Heart right ventricle (tissue), 16 donors: ENCODE measurements at regions of chr20 and their contacts with region 1.

Region 1: GRCh38 chr20:47501483-47502270 is at the start of gene NCOA3:
- DNase-seq: peak; percentile 95 to 97
- ATAC-seq: peak; percentile 97 to 99 (median 99)
- H3K4me3 ChIP-seq: peak within 1 kb of the TSS; percentile 82 to 100 (median 94)
- H3K27ac ChIP-seq: peak within 1 kb of the TSS; percentile 90 to 99 (median 94)
- H3K4me1 ChIP-seq: peaks cover 0 to 46% (median 26%) of the 10 kb centered on the region in 9 donors
- H3K27me3 ChIP-seq: no peaks in the 10 kb centered on the region
- CTCF ChIP-seq: peak; percentile 32 to 69 (median 58)
- total RNA-seq, gene NCOA3: 19.7 to 30.2 (median 22.6) TPM

Region 2: GRCh38 chr20:47272893-47273590 is 228.6 kb before region 1 on chr20:
- intact Hi-C with region 1: no loop called
- DNase-seq: peak in 1 of 2 donors; percentile 77
- ATAC-seq: peak; percentile 39 to 84 (median 69)
- H3K4me3 ChIP-seq: no peak overlapping the region
- H3K27ac ChIP-seq: peak overlapping the region in 9 of 10 donors; percentile 42 to 89 (median 67)
- H3K4me1 ChIP-seq: peaks cover 10 to 53% (median 51%) of the 10 kb centered on the region in 9 donors
- H3K27me3 ChIP-seq: no peaks in the 10 kb centered on the region
- CTCF ChIP-seq: peak; percentile 76 to 92 (median 88)

Region 3: GRCh38 chr20:47392015-47392720 is 109.5 kb before region 1 on chr20:
- intact Hi-C with region 1: loop called in 2 of 10 experiments (anchors 5 kb)
- DNase-seq: no peak
- ATAC-seq: peak in 7 of 8 donors; percentile 39 to 90 (median 54)
- H3K4me3 ChIP-seq: no peak overlapping the region
- H3K27ac ChIP-seq: peak overlapping the region in 2 of 10 donors; percentile 56 to 66
- H3K4me1 ChIP-seq: peaks cover 0 to 14% (median 0%) of the 10 kb centered on the region in 9 donors
- H3K27me3 ChIP-seq: no peaks in the 10 kb centered on the region
- CTCF ChIP-seq: no peak

Region 4: GRCh38 chr20:47464380-47465101 is 37.1 kb before region 1 on chr20:
- intact Hi-C with region 1: no loop called
- DNase-seq: peak; percentile 23 to 53
- ATAC-seq: peak; percentile 69 to 99 (median 90)
- H3K4me3 ChIP-seq: no peak overlapping the region
- H3K27ac ChIP-seq: peak overlapping the region in 7 of 10 donors; percentile 6 to 30 (median 22)
- H3K4me1 ChIP-seq: peaks cover 5 to 28% (median 12%) of the 10 kb centered on the region in 9 donors
- H3K27me3 ChIP-seq: no peaks in the 10 kb centered on the region
- CTCF ChIP-seq: peak; percentile 5 to 42 (median 35)

Region 5: GRCh38 chr20:47540443-47541354 is 39.0 kb after region 1 on chr20:
- intact Hi-C with region 1: loop called in 3 of 10 experiments (anchors 5 kb)
- DNase-seq: no peak
- ATAC-seq: no peak
- H3K4me3 ChIP-seq: no peak overlapping the region
- H3K27ac ChIP-seq: no peak overlapping the region
- H3K4me1 ChIP-seq: peaks cover 5 to 68% (median 54%) of the 10 kb centered on the region in 9 donors
- H3K27me3 ChIP-seq: no peaks in the 10 kb centered on the region
- CTCF ChIP-seq: no peak

Region 6: GRCh38 chr20:47561180-47561579 is 59.5 kb after region 1 on chr20:
- intact Hi-C with region 1: loop called in 1 of 10 experiments (anchors 5 kb)
- DNase-seq: no peak
- ATAC-seq: peak; percentile 19 to 63 (median 42)
- H3K4me3 ChIP-seq: no peak overlapping the region
- H3K27ac ChIP-seq: peak overlapping the region in 1 of 10 donors; percentile 5
- H3K4me1 ChIP-seq: peaks cover 3 to 97% (median 74%) of the 10 kb centered on the region in 9 donors
- H3K27me3 ChIP-seq: no peaks in the 10 kb centered on the region
- CTCF ChIP-seq: no peak

Region 7: DNA sequence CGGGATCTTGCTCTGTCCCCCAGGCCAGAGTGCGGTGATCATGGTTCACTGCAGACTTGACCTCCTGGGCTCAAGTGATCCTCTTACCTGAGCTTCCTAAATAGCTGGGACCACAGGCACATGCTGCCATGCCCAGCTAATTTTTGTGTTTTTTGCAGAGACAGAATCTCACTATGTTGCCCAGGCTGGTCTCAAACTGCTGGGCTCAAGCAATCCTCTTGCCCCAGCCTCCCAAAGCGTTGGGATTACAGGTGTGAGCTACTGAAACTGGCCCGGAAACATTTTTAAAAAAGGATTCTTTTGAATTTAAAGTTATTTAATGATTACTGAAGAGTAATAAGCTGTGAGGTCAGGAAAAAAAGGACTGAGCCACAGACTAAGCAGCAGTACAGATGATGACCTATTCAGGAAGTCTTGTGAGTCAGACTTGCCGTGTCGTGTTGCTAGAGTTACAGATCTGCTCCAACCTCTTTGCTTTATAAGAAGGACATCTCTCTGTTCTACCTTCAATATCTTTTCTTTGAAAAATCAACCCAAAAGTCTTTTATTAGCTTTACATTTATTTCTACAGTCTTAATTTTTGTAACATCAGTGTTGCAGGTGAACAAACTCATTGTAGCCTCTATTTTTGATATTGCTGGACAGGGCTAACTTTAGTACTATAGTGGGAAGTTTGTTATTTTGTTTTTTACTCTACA is 108.7 kb after region 1 on chr20:
- intact Hi-C with region 1: loop called in 4 of 10 experiments (anchors 5 to 10 kb)
- DNase-seq: peak in 1 of 2 donors; percentile 61
- ATAC-seq: peak; percentile 55 to 90 (median 80)
- H3K4me3 ChIP-seq: no peak overlapping the region
- H3K27ac ChIP-seq: peak overlapping the region in 4 of 10 donors; percentile 17 to 74 (median 28)
- H3K4me1 ChIP-seq: peaks cover 0 to 85% (median 40%) of the 10 kb centered on the region in 9 donors
- H3K27me3 ChIP-seq: no peaks in the 10 kb centered on the region
- CTCF ChIP-seq: no peak